ENCODE measurements at regions of chr20 and their contacts with region 1.

Region 1: GRCh38 chr20:844473-845225 is 11.1 kb downstream of the FAM110A start:
- DNase-seq: peak; percentile 81 to 97 (median 90)
- ATAC-seq: peak; percentile 94
- H3K4me3 ChIP-seq: peak overlapping the region; percentile 65 to 71
- H3K4me3 Mint-ChIP-seq: peak overlapping the region; percentile 94
- H3K27ac ChIP-seq: peak overlapping the region; percentile 26 to 48
- H3K27ac Mint-ChIP-seq: peak overlapping the region; percentile 84
- H3K4me1 ChIP-seq: peaks cover 52% of the 10 kb centered on the region
- H3K4me1 Mint-ChIP-seq: peaks cover 54% of the 10 kb centered on the region
- H3K27me3 ChIP-seq: no peaks in the 10 kb centered on the region
- H3K27me3 Mint-ChIP-seq: no peaks in the 10 kb centered on the region
- CTCF ChIP-seq: no peak

Region 2: GRCh38 chr20:856361-857040 is 11.9 kb after region 1 on chr20:
- CTCF ChIA-PET with region 1: interaction called, 3 read pairs
- POLR2A ChIA-PET with region 1: interaction called, 14 read pairs
- intact Hi-C with region 1: no loop called
- DNase-seq: peak in 7 of 9 experiments; percentile 30 to 77 (median 64)
- ATAC-seq: peak; percentile 91
- H3K4me3 ChIP-seq: peak overlapping the region in 1 of 2 experiments; percentile 28
- H3K4me3 Mint-ChIP-seq: peak overlapping the region; percentile 66
- H3K27ac ChIP-seq: peak overlapping the region in 1 of 2 experiments; percentile 17
- H3K27ac Mint-ChIP-seq: peak overlapping the region; percentile 83
- H3K4me1 ChIP-seq: peaks cover 37% of the 10 kb centered on the region
- H3K4me1 Mint-ChIP-seq: peaks cover 62% of the 10 kb centered on the region
- H3K27me3 ChIP-seq: no peaks in the 10 kb centered on the region
- H3K27me3 Mint-ChIP-seq: no peaks in the 10 kb centered on the region
- CTCF ChIP-seq: no peak

Region 3: DNA sequence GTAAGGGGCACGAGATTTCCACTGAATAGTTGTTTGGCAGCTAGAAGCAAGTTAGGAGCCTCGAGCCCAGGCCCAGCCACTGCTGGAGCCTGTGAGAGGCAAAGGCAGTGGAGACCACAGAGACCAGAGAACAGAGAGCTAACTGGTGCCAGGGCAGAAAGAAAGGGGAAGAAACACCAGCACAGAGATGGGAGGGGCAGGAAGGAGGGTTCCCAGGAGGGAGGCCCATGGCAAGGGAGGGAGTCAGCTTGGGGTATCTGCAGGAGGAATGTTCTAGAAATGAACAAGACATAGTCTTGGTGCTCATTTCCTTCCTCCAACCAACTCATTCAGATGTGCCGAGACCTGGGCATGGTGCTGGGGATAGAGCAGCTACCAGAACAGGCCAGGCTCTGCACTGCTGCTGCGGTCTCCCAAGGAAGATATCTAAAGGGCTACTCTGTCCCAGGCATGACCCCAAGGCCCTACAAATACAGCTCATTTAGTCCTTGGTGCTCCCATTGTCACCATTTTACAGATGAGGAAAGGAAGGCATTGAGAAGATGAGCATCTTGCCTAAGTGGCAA is 60.8 kb after region 1 on chr20:
- CTCF ChIA-PET with region 1: no interaction called
- POLR2A ChIA-PET with region 1: no interaction called
- intact Hi-C with region 1: no loop called
- DNase-seq: no peak
- ATAC-seq: no peak
- H3K4me3 ChIP-seq: no peak overlapping the region
- H3K4me3 Mint-ChIP-seq: no peak overlapping the region
- H3K27ac ChIP-seq: no peak overlapping the region
- H3K27ac Mint-ChIP-seq: no peak overlapping the region
- H3K4me1 ChIP-seq: no peaks in the 10 kb centered on the region
- H3K4me1 Mint-ChIP-seq: no peaks in the 10 kb centered on the region
- H3K27me3 ChIP-seq: no peaks in the 10 kb centered on the region
- H3K27me3 Mint-ChIP-seq: no peaks in the 10 kb centered on the region
- CTCF ChIP-seq: no peak

Region 4: DNA sequence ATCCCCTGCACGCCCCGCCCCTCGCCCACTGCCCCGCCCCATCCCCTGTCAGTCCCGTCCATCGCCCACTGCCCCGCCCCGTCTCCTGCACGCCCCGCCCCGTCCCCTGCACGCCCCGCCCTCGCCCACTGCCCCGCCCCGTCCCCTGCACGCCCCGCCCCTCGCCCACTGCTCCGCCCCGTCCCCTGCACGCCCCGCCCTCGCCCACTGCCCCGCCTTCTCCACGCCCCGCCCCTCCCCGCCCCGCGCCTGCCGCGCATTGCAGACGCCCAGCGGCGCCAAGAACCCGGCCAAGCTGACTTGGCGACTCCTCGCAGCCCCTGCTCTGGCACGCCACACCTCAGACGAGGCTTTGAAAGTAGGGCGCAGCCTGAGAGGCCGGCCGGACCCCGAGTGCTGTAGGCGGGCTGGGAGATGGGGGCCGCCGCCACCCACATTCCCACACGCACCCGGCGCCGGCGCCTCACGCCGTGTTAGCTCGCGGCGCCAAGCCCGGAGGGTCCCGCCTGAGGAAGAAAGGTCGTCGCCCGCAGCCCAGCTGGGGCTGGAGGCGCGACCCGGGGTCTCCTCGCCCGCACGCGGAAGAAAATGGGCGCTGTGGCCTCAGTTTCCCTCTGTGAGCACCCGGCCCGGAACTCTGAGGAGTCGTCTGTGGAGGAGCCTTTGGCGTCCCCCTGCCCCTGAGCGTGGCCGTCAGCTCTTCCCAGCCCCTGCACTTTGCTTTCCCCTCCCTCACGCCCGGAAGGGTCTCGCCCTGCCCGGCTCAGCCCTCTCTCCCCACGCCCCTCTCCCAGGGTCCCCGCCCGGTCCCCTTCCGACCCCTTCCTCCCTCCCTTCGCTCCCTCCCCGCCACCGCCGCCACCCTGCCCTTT is 381.4 kb after region 1 on chr20 and contains the start of gene RAD21L1:
- CTCF ChIA-PET with region 1: no interaction called
- POLR2A ChIA-PET with region 1: no interaction called
- intact Hi-C with region 1: loop called (anchors 1 to 5 kb)
- DNase-seq: peak; percentile 63 to 85 (median 80)
- ATAC-seq: peak; percentile 93
- H3K4me3 ChIP-seq: peak within 1 kb of the TSS; percentile 64 to 82
- H3K4me3 Mint-ChIP-seq: peak within 1 kb of the TSS; percentile 87
- H3K27ac ChIP-seq: peak within 1 kb of the TSS in 1 of 2 experiments; percentile 44
- H3K27ac Mint-ChIP-seq: no peak within 1 kb of the TSS
- H3K4me1 ChIP-seq: peaks cover 9% of the 10 kb centered on the region
- H3K4me1 Mint-ChIP-seq: peaks cover 18% of the 10 kb centered on the region
- H3K27me3 ChIP-seq: peaks cover 0 to 8% of the 10 kb centered on the region in 2 experiments
- H3K27me3 Mint-ChIP-seq: peaks cover 13% of the 10 kb centered on the region
- CTCF ChIP-seq: no peak
- total RNA-seq, gene RAD21L1: not detected